Posterior vena cava (tissue), 2 donors: ENCODE measurements at regions of chr7 and their contacts with region 1.

Region 1: DNA sequence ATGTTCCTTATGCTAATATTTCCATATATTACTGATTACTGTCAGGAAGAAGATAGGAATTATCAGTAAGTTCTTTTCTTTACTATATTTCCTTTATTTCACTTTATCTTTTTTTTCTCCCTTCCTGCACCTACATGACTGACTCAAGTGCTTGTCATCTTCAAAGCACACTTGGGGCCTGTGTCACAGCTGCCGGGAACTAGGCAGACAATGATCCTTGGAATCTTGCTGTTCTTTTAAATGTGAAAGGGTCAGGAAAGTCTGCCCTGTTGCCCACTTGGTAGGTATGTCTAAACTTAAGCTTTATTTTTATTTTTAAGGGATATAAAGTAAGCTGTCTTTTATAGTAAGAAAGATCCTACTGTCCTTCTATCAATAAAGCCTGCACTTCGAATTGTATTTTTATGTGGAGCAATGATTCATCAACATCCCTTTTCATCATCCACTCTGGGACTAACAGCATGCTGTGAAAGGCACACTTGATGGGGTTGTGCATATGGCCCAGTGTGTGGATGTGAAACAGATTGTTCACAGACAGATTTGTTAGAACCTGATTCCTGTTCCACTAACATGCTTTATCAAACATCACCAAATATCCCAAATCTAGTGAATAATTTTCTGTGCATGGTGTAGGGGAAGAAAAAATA is 556.9 kb downstream of the DNAJB9 start:
- DNase-seq: no peak

Region 2: GRCh38 chr7:109111086-109111485 is 15.4 kb before region 1 on chr7:
- intact Hi-C with region 1: loop called in 1 of 2 experiments (anchors 2 kb)
- DNase-seq: no peak

Region 3: DNA sequence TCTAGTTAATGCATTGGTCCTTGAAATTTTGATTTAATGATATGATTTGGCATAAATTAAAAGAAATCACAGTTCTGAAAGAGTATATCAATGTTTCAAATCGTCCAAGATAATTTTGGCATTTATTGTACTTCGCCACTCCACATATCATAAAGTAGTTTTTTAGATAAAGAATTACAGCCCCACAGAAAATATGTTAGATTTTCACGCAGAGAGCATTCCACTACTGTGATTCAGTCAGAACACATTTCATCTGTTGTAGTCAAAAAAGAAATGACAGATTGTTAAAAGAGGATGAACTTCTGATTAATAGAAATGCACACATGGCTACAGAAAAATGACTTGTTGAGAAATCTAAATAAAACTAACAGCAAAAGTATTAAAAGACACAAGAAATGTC is 900.9 kb after region 1 on chr7:
- intact Hi-C with region 1: loop called in 1 of 2 experiments (anchors 5 kb)
- DNase-seq: no peak